ENCODE measurements at regions of chr3 and their contacts with region 1.

Region 1: DNA sequence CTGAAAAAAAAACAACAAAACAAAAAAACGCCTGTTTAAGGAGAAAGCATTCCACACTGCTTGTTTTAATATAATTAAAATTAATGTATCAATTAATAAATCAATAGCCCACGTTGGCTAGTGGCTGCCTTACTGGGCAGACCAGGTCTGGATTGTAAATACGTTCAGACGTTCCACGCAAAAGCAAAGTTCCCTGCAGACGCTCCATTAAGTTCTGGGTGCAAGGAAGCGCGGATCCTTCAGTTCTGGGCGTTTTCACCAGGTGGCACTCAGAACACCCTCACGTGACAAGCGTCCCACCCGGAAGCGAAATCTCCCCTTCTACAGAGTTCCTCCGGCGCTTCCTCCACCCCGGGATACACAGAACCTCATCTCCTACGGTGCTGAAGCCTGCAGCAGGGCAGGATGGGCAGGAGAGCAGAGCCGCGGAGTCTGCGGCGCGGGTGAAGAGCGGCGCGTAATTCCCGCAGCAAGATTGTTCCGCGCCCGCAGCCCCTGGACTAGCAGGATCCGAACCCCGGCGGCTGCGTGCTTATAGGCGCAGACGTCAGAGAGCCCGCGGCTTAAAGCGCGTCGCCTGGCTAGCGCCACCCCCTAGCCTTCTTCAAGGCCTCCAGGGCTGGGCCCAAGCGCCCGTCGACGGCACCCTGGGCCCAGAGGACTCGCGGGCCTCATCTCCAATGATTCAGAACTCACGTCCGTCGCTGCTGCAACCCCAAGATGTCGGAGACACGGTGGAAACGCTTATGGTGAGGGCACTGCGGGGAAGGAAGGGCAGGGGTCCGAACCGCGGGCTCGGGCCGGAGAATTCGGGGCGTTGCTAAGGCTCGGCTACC is at the start of gene SLC25A38:
- DNase-seq: peak; percentile 88
- CTCF ChIP-seq: no peak

Region 2: DNA sequence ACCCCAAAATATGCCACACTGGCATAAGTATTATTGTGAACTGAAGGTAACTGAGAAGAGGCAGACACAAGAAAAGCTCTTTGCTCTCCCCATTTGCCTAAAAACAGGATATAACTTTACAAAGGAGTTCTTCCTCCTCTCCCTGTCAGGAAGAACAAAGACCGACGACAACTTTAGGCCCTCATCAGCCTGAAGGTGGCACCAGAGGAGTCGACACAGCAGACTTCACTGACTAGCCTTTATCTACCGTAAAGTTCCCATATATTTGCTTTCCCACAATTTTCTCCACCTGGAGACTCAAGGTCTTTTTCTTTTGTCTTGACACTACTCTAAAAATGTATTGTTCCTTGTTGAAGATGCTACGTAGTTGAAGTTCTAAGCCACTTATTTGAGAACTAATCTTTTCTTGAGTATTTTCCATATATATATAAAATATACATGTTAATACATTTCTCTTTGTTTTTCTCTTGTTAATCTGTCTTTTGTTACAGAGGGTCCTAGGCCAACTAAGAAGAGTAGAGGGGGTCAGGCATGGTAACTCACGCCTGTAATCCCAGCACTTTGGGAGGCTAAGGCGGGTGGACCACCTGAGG is 174.7 kb before region 1 on chr3:
- in situ Hi-C with region 1: loop called (anchors 10 kb)
- DNase-seq: peak; percentile 53
- CTCF ChIP-seq: peak; percentile 51

Region 3: DNA sequence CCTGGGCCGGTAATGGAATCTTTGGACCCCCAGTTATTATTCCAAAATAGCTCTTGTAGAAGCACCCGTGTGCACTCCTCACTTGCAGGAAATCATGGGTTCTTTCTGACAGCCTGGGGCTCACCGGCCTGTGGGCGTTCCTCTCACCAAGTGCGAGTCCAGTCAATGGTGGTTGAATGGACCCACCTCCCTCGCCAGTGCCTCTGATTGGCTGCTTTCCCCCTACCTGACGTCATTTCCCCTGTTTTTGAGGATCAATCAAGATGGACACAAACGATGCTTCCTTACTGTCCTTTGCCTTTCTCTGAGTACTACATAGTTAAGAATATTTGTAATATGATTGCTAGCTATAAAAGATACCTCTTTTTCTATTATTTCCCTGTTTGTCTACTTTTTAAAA is 102.3 kb after region 1 on chr3:
- in situ Hi-C with region 1: no loop called
- DNase-seq: no peak
- CTCF ChIP-seq: no peak

Measured in GM13976 (cell line).